IMR-90 (cell line): ENCODE measurements at regions of chr3 and their contacts with region 1.

Region 1: GRCh38 chr3:149947231-149947630 is 23.5 kb downstream of the PFN2 start:
- DNase-seq: no peak
- ATAC-seq: no peak
- H3K4me3 ChIP-seq: no peak overlapping the region
- H3K27ac ChIP-seq: no peak overlapping the region
- H3K4me1 ChIP-seq: no peaks in the 10 kb centered on the region
- H3K27me3 ChIP-seq: no peaks in the 10 kb centered on the region
- CTCF ChIP-seq: no peak
- POLR2A ChIP-seq: no peak
- RAD21 ChIP-seq: no peak

Region 2: GRCh38 chr3:150194957-150195356 is 247.7 kb after region 1 on chr3:
- CTCF ChIA-PET with region 1: no interaction called
- POLR2A ChIA-PET with region 1: no interaction called
- dilution Hi-C with region 1: no loop called
- in situ Hi-C with region 1: no loop called
- intact Hi-C with region 1: loop called (anchors 5 kb)
- DNase-seq: no peak
- ATAC-seq: no peak
- H3K4me3 ChIP-seq: no peak overlapping the region
- H3K27ac ChIP-seq: no peak overlapping the region
- H3K4me1 ChIP-seq: no peaks in the 10 kb centered on the region
- H3K27me3 ChIP-seq: no peaks in the 10 kb centered on the region
- CTCF ChIP-seq: no peak
- POLR2A ChIP-seq: no peak
- RAD21 ChIP-seq: no peak